Heart right ventricle (tissue), 16 donors: ENCODE measurements at regions of chr18 and their contacts with region 1.

Region 1: DNA sequence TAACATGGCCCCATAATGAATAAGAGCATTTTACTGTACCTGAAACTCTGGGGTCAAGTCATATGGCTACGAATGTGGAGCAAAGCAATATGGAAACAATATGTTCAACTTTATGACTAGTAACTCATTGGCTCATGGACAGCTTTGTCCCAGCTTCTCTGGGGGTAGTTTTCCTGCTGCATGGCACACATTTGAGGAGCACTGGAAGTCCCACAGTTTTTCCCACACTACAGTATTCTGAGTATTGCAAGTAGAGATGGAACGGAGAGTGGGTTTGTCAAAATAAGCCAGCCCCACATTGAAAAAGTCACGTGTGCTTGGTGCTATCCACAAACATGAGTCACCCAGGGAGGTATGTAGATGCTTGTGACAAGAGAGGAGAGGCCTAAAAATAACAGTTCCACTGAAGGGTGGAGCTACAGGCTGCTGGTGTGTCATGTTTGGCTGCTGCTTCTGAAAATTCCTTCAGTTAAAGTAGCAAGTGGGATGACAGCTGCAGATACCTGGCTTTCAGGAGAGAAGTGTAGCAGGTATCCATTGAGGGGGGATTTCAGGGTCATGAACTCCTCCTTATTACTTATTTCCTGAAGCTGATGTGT is 48.2 kb upstream of the CTAGE1 start:
- DNase-seq: peak in 1 of 2 donors; percentile 74
- ATAC-seq: peak; percentile 85 to 95 (median 90)
- H3K4me3 ChIP-seq: no peak overlapping the region
- H3K27ac ChIP-seq: peak overlapping the region; percentile 56 to 90 (median 85)
- H3K4me1 ChIP-seq: peaks cover 15 to 48% (median 42%) of the 10 kb centered on the region in 9 donors
- H3K27me3 ChIP-seq: no peaks in the 10 kb centered on the region
- CTCF ChIP-seq: no peak

Region 2: GRCh38 chr18:22385718-22386117 is 80.2 kb before region 1 on chr18:
- intact Hi-C with region 1: loop called in 1 of 10 experiments (anchors 10 kb)
- DNase-seq: no peak
- ATAC-seq: no peak
- H3K4me3 ChIP-seq: no peak overlapping the region
- H3K27ac ChIP-seq: peak overlapping the region in 1 of 10 donors; percentile 8
- H3K4me1 ChIP-seq: peaks cover 0 to 11% (median 0%) of the 10 kb centered on the region in 9 donors
- H3K27me3 ChIP-seq: no peaks in the 10 kb centered on the region
- CTCF ChIP-seq: no peak

Region 3: GRCh38 chr18:22398464-22398863 is 67.5 kb before region 1 on chr18:
- intact Hi-C with region 1: no loop called
- DNase-seq: peak in 1 of 2 donors; percentile 29
- ATAC-seq: peak in 6 of 8 donors; percentile 55 to 78 (median 72)
- H3K4me3 ChIP-seq: no peak overlapping the region
- H3K27ac ChIP-seq: peak overlapping the region in 7 of 10 donors; percentile 19 to 52 (median 32)
- H3K4me1 ChIP-seq: peaks cover 0 to 30% (median 19%) of the 10 kb centered on the region in 9 donors
- H3K27me3 ChIP-seq: no peaks in the 10 kb centered on the region
- CTCF ChIP-seq: no peak